ENCODE measurements at regions of chr1 and their contacts with region 1.

Region 1: GRCh38 chr1:84143796-84144565 is at the start of gene PRKACB:
- DNase-seq: no peak
- ATAC-seq: peak; percentile 89
- H3K4me3 Mint-ChIP-seq: peak within 1 kb of the TSS; percentile 85
- H3K27ac Mint-ChIP-seq: peak within 1 kb of the TSS; percentile 98
- H3K4me1 Mint-ChIP-seq: peaks cover 40% of the 10 kb centered on the region
- H3K27me3 Mint-ChIP-seq: no peaks in the 10 kb centered on the region
- total RNA-seq, gene PRKACB: 22.2 to 25.5 TPM

Region 2: DNA sequence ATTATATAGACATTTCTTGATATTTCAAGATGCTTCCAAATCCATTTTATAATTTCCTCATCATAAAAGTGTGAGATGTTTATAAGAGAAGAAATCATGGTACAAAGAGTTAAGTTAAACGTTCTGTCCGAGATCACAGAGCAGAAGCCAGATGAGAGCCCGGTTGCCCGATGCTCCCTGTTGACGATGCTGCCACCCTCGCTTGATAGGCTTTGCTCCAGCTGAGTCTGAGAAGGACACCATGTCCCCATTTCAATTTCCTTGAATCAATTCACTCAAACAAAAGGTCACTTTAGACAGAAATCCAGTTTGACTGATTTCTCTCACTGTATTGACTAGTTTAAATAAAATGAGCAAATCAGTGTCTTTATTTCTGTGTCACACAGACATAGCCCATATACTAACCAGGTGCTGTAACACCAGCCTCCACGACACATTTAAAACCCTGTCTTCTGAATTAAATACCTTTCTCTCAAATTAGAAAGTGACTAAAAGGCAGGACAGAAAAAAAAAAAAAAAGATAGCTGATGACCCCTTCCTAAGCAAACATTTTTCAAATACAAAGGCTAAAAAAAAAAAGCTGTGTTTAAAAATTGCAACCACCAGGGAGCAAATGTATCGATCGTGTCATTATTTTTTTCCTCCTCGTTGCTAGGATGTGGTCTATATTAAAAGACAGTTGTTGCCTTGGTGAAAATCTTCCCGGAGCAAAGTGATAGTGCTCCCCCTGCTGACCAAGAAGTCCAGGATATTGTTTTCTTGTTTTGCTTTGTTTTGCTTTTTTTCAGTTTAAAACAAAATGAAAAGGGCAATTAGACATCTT is 289.5 kb after region 1 on chr1:
- CTCF ChIA-PET with region 1: interaction called, 74 read pairs
- POLR2A ChIA-PET with region 1: no interaction called
- intact Hi-C with region 1: loop called (anchors 1 kb)
- DNase-seq: peak; percentile 65
- ATAC-seq: peak; percentile 76
- H3K4me3 Mint-ChIP-seq: peak overlapping the region; percentile 48
- H3K27ac Mint-ChIP-seq: peak overlapping the region; percentile 32
- H3K4me1 Mint-ChIP-seq: peaks cover 18% of the 10 kb centered on the region
- H3K27me3 Mint-ChIP-seq: no peaks in the 10 kb centered on the region

Region 3: DNA sequence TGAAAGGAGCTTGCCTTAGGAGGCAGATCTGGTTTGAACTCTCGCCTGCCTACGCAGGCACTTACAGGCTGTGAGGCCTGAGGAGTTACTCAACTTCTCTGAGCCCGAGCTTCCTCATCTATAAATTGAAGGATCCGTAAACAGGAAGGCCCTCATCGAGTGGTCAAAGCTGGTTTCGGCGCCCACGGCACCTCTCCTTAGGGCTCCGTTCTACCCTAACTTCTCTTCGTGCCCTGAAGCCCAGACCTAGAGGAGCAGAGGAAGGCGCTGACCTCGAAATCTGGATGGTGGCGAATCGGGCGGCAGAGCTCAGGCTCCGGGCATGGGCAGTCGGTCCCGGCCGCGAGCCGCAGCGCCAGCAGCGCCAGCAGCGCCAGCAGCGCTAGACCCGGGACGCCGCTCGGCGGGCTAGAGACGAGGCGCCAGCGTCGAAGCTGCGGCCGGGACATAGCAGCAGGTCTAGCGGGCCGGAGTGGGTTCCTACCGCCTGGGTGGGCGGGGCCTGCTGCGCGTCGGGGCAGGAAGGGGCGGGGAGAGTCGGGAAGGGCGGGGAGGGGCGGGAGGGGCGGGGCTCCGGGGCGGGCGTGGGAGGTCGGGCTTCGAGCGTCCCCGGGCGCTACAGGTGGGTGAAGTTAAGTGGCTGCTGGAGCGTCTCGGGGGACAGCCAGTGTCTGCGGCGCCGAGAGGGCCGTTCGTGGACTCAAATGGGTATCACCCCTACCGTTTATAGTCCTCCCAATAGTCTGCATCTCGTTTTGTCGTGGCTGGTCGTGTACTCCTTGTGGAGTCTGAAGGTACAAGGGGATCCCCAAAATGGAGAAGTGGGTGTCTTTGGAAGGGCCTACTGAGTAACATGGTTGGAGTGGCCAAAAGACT is 430.2 kb after region 1 on chr1 and contains the start of gene CTBS:
- CTCF ChIA-PET with region 1: interaction called, 5 read pairs
- POLR2A ChIA-PET with region 1: no interaction called
- intact Hi-C with region 1: loop called in 1 of 2 experiments (anchors 5 kb)
- DNase-seq: peak; percentile 94
- ATAC-seq: peak; percentile 85
- H3K4me3 Mint-ChIP-seq: peak within 1 kb of the TSS; percentile 97
- H3K27ac Mint-ChIP-seq: peak within 1 kb of the TSS; percentile 99
- H3K4me1 Mint-ChIP-seq: peaks cover 45% of the 10 kb centered on the region
- H3K27me3 Mint-ChIP-seq: no peaks in the 10 kb centered on the region
- total RNA-seq, gene CTBS: 13.5 to 17.3 TPM

Region 4: GRCh38 chr1:84724128-84724860 is 580.3 kb after region 1 on chr1:
- CTCF ChIA-PET with region 1: interaction called, 12 read pairs
- POLR2A ChIA-PET with region 1: no interaction called
- intact Hi-C with region 1: no loop called
- DNase-seq: peak; percentile 74
- ATAC-seq: peak; percentile 64
- H3K4me3 Mint-ChIP-seq: no peak overlapping the region
- H3K27ac Mint-ChIP-seq: no peak overlapping the region
- H3K4me1 Mint-ChIP-seq: peaks cover 18% of the 10 kb centered on the region
- H3K27me3 Mint-ChIP-seq: no peaks in the 10 kb centered on the region

Region 5: GRCh38 chr1:84853741-84854721 is 710.0 kb after region 1 on chr1:
- CTCF ChIA-PET with region 1: no interaction called
- POLR2A ChIA-PET with region 1: no interaction called
- intact Hi-C with region 1: loop called in 1 of 2 experiments (anchors 10 kb)
- DNase-seq: peak; percentile 49
- ATAC-seq: peak; percentile 100
- H3K4me3 Mint-ChIP-seq: no peak overlapping the region
- H3K27ac Mint-ChIP-seq: peak overlapping the region; percentile 77
- H3K4me1 Mint-ChIP-seq: peaks cover 33% of the 10 kb centered on the region
- H3K27me3 Mint-ChIP-seq: no peaks in the 10 kb centered on the region